ENCODE measurements at regions of chr18 and their contacts with region 1.

Region 1: DNA sequence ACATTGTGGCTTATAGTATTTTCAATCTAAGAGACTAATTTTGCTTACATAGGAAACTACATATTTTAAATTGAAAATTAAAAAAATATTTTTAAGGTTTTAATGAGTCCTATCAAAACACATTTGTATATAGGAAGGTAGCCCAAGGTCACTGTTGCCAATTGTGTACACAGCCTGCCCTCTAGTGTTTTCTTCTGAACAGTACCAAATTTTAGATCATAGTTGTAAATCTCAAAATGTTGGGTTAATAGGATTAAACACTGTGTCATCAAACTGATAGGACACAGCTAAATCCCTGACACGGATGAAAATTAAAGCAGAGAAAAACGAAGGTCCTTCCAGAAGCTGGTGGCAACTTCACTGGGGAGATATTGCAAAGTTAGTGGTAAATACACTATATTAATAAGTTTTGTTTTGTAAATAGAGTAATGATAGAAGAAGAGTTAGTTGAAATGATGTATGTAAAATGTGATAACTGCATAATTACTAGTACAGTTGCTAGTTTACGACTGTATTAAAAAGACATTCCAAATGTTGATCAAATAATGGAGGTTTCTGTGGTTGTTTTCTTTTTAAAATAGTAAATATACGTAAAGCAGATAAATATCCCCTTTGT is 19.7 kb downstream of the CLUL1 start:
- DNase-seq: peak; percentile 64
- H3K4me3 ChIP-seq: no peak overlapping the region
- H3K27ac ChIP-seq: no peak overlapping the region
- H3K4me1 ChIP-seq: no peaks in the 10 kb centered on the region
- H3K27me3 ChIP-seq: no peaks in the 10 kb centered on the region
- CTCF ChIP-seq: peak; percentile 47 to 50
- POLR2A ChIP-seq: no peak

Region 2: GRCh38 chr18:267688-268552 is 348.6 kb before region 1 on chr18 and contains the start of gene THOC1:
- CTCF ChIA-PET with region 1: interaction called, 8 read pairs
- POLR2A ChIA-PET with region 1: interaction called, 3 read pairs
- dilution Hi-C with region 1: no loop called
- intact Hi-C with region 1: loop called (anchors 1 kb)
- DNase-seq: peak; percentile 93
- H3K4me3 ChIP-seq: peak within 1 kb of the TSS; percentile 71 to 92 (median 83)
- H3K27ac ChIP-seq: peak within 1 kb of the TSS; percentile 97
- H3K4me1 ChIP-seq: peaks cover 11% of the 10 kb centered on the region
- H3K27me3 ChIP-seq: no peaks in the 10 kb centered on the region
- CTCF ChIP-seq: no peak
- POLR2A ChIP-seq: peak; percentile 92
- total RNA-seq, gene THOC1: 43.5 and 50.5 TPM in 2 replicates

Region 3: DNA sequence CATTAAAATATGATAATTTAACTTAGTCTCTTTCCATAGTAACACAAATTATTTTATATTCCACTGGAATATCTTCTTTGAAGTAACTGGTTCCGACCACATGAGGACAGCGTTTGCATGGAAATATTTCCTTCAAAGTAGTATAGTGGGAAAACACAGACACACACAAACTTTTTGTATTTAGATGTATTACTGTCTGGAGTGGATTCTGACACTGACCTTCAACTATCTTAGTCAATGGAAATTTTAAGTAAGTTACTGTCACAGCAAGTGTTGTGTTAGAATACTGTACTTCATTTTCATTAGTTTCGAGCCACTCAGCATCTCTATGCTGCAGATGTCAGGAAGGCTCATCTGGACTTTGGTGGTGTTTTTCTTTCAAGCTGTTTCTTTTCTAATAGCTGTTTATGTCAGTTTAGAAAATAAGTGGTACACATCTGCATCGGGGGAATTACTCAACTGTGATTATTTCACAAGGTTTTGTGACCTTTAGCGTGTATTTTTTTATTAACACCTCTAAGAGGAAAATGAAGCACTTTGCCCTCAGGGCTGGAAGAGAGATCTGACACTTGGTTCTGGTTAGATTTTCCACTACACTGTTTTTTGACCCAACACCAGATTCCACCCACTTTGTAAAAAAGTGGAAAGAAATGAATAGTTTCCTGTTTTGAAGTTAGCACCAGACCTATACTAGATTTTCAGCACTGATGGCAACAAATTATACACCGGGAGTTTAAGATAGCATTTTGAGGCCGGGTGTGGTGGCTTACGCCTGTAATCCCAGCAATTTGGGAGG is 329.8 kb before region 1 on chr18:
- CTCF ChIA-PET with region 1: interaction called, 82 read pairs
- POLR2A ChIA-PET with region 1: no interaction called
- dilution Hi-C with region 1: no loop called
- intact Hi-C with region 1: loop called (anchors 1 kb)
- DNase-seq: peak; percentile 67
- H3K4me3 ChIP-seq: no peak overlapping the region
- H3K27ac ChIP-seq: no peak overlapping the region
- H3K4me1 ChIP-seq: no peaks in the 10 kb centered on the region
- H3K27me3 ChIP-seq: peaks cover 0 to 3% of the 10 kb centered on the region in 2 experiments
- CTCF ChIP-seq: peak; percentile 38 to 39
- POLR2A ChIP-seq: no peak

Region 4: GRCh38 chr18:293536-293935 is 323.0 kb before region 1 on chr18:
- CTCF ChIA-PET with region 1: interaction called, 82 read pairs
- POLR2A ChIA-PET with region 1: no interaction called
- dilution Hi-C with region 1: no loop called
- intact Hi-C with region 1: no loop called
- DNase-seq: peak; percentile 33
- H3K4me3 ChIP-seq: no peak overlapping the region
- H3K27ac ChIP-seq: no peak overlapping the region
- H3K4me1 ChIP-seq: peaks cover 11% of the 10 kb centered on the region
- H3K27me3 ChIP-seq: no peaks in the 10 kb centered on the region
- CTCF ChIP-seq: no peak
- POLR2A ChIP-seq: no peak

Region 5: DNA sequence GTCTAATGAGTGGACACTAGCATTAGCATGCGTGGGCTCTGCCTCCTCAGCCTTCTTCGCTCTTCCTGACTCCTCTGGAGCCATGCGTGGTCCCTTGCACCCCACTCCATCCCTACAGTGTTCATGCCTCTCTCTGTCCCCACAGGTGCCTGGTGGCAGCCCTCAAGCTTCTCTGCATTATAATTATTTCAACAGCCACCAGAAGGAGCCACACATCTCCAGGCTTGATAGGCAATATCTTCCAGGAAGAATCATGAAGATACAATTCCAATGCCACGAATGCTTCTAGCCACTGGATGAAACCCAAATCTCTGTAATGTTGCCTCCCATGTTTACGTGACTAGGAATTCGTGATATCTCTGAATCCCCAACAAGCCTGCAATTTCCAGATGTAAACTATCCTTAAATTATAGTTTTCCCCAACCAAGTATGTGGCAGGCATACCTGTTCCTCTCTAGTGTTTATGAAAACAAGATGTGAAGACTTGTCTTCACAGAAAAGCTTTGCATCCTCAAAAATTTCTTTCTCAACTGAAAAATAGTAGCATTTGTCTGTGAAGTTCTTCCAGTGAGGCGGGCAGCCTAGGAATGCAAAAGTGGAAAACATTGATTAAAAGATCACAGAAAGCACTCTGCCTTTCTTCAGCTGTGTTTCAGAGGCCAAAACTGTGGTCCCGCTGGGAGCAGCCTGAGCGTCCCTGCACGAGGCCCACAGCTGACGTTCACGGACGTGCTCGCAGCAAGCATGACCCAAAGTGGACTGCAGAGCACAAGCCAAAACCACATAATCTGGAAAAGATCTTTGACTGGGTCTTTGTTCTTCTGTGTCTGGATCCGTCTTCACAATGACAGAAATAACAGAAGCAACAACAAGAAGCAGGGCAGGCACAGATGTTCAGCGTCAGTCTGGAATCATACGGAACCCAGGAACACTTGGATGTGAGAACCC is 283.7 kb before region 1 on chr18:
- CTCF ChIA-PET with region 1: interaction called, 5 read pairs
- POLR2A ChIA-PET with region 1: no interaction called
- dilution Hi-C with region 1: no loop called
- intact Hi-C with region 1: loop called (anchors 2 kb)
- DNase-seq: no peak
- H3K4me3 ChIP-seq: no peak overlapping the region
- H3K27ac ChIP-seq: no peak overlapping the region
- H3K4me1 ChIP-seq: peaks cover 16% of the 10 kb centered on the region
- H3K27me3 ChIP-seq: no peaks in the 10 kb centered on the region
- CTCF ChIP-seq: no peak
- POLR2A ChIP-seq: no peak

Region 6: DNA sequence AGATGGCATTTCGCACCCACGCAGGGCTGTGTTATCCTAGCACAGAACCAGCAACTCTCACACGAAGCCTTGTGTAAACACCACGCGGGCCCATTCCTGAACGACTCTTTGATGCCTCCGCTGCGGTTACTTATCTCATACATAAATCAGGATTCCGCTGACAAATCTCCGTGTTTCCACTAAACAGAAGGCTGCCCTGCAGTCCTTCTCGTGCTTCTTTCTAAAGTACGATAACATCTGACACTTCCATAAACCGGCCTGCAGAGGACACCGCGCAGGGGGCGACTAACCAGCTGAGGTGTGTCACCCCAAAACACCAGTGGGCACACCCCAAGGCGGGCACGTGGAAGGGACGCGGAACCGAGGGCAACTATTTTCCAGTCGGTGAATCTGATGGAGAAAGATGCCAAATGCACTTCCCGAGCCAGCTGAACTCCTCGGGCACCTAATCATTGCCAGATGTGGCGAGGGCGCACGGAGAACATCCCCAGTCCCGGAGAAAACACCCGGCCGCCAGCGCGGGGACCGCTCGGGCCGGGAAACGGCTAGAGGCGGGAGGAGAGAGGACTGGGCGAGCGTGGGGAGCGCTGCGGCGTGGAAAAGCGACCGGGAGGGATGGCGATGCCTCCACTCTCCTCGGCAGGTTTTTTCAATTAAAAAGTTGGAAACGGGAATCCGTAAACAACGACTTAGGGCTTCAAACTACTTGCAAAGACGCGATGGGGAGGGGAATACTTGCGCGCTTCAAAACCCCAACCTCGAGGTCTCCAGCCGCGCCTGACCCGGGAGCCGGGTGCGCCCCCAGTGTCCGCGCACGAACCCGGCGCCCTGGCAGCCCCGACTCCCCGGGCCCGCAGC is 116.7 kb before region 1 on chr18:
- CTCF ChIA-PET with region 1: interaction called, 3 read pairs
- POLR2A ChIA-PET with region 1: no interaction called
- dilution Hi-C with region 1: no loop called
- intact Hi-C with region 1: loop called (anchors 5 kb)
- DNase-seq: peak; percentile 57
- H3K4me3 ChIP-seq: peak overlapping the region; percentile 5 to 58 (median 38)
- H3K27ac ChIP-seq: no peak overlapping the region
- H3K4me1 ChIP-seq: peaks cover 13% of the 10 kb centered on the region
- H3K27me3 ChIP-seq: peaks cover 3 to 15% of the 10 kb centered on the region in 2 experiments
- CTCF ChIP-seq: peak in 1 of 2 donors; percentile 13
- POLR2A ChIP-seq: no peak

Region 7: DNA sequence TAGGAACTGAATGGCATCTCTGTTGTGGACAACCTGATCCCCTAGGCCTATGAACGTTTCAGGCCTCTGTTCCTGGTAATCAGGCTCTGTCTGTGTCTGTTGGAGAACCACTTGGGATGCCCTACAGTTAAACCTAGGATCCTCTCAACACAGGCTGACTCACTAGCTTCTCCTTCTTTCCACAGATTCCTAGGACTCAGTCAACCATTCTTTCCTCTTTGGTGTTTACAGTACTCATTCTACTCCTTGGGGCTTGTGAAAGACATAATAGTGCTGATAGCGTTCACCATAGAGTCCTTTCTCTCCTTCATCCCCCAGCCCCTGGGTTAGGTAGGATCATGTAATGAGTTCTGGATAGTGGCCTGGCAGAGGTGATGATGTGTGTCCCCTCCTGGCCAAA is 1410.5 kb after region 1 on chr18:
- CTCF ChIA-PET with region 1: no interaction called
- POLR2A ChIA-PET with region 1: no interaction called
- dilution Hi-C with region 1: no loop called
- intact Hi-C with region 1: no loop called
- DNase-seq: no peak
- H3K4me3 ChIP-seq: no peak overlapping the region
- H3K27ac ChIP-seq: no peak overlapping the region
- H3K4me1 ChIP-seq: no peaks in the 10 kb centered on the region
- H3K27me3 ChIP-seq: no peaks in the 10 kb centered on the region
- CTCF ChIP-seq: no peak
- POLR2A ChIP-seq: no peak

Measured in endothelial cell of umbilical vein (primary cell).